ENCODE measurements at regions of chr3 and their contacts with region 1.

Region 1: GRCh38 chr3:141011232-141011996 is 39.7 kb upstream of the SPSB4 start:
- DNase-seq: peak; percentile 93
- ATAC-seq: peak; percentile 98
- H3K4me3 Mint-ChIP-seq: no peak overlapping the region
- H3K27ac Mint-ChIP-seq: no peak overlapping the region
- H3K4me1 Mint-ChIP-seq: peaks cover 3% of the 10 kb centered on the region
- H3K27me3 Mint-ChIP-seq: peaks cover 12% of the 10 kb centered on the region

Region 2: GRCh38 chr3:141000027-141000663 is 11.3 kb before region 1 on chr3:
- CTCF ChIA-PET with region 1: interaction called, 52 read pairs
- POLR2A ChIA-PET with region 1: interaction called, 3 read pairs
- intact Hi-C with region 1: no loop called
- DNase-seq: peak; percentile 74
- ATAC-seq: peak; percentile 90
- H3K4me3 Mint-ChIP-seq: no peak overlapping the region
- H3K27ac Mint-ChIP-seq: no peak overlapping the region
- H3K4me1 Mint-ChIP-seq: peaks cover 7% of the 10 kb centered on the region
- H3K27me3 Mint-ChIP-seq: no peaks in the 10 kb centered on the region

Region 3: GRCh38 chr3:141243271-141243707 is 231.9 kb after region 1 on chr3:
- CTCF ChIA-PET with region 1: no interaction called
- POLR2A ChIA-PET with region 1: no interaction called
- intact Hi-C with region 1: no loop called
- DNase-seq: peak; percentile 82
- ATAC-seq: peak; percentile 98
- H3K4me3 Mint-ChIP-seq: peak overlapping the region; percentile 7
- H3K27ac Mint-ChIP-seq: peak overlapping the region; percentile 49
- H3K4me1 Mint-ChIP-seq: peaks cover 43% of the 10 kb centered on the region
- H3K27me3 Mint-ChIP-seq: no peaks in the 10 kb centered on the region

Region 4: GRCh38 chr3:141279077-141279967 is 267.9 kb after region 1 on chr3:
- CTCF ChIA-PET with region 1: no interaction called
- POLR2A ChIA-PET with region 1: no interaction called
- intact Hi-C with region 1: loop called in 1 of 2 experiments (anchors 5 kb)
- DNase-seq: peak; percentile 32
- ATAC-seq: peak; percentile 56
- H3K4me3 Mint-ChIP-seq: no peak overlapping the region
- H3K27ac Mint-ChIP-seq: peak overlapping the region; percentile 59
- H3K4me1 Mint-ChIP-seq: peaks cover 17% of the 10 kb centered on the region
- H3K27me3 Mint-ChIP-seq: no peaks in the 10 kb centered on the region